ENCODE measurements at regions of chr1 and their contacts with region 1.

Region 1: GRCh38 chr1:24070821-24071393 is 41.0 kb downstream of the MYOM3 start:
- DNase-seq: peak; percentile 86 to 92 (median 90)
- ATAC-seq: peak; percentile 98
- H3K4me3 ChIP-seq: no peak overlapping the region
- H3K27ac ChIP-seq: no peak overlapping the region
- H3K4me1 ChIP-seq: no peaks in the 10 kb centered on the region; a peak in 1 of 5 replicates
- H3K27me3 ChIP-seq: peaks cover 36 to 68% of the 10 kb centered on the region in 2 experiments; a peak in 4 of 5 replicates
- CTCF ChIP-seq: peak; percentile 97 to 98 (median 97)
- EP300 ChIP-seq: no peak
- POLR2A ChIP-seq: no peak
- RAD21 ChIP-seq: peak; percentile 91 to 94

Region 2: DNA sequence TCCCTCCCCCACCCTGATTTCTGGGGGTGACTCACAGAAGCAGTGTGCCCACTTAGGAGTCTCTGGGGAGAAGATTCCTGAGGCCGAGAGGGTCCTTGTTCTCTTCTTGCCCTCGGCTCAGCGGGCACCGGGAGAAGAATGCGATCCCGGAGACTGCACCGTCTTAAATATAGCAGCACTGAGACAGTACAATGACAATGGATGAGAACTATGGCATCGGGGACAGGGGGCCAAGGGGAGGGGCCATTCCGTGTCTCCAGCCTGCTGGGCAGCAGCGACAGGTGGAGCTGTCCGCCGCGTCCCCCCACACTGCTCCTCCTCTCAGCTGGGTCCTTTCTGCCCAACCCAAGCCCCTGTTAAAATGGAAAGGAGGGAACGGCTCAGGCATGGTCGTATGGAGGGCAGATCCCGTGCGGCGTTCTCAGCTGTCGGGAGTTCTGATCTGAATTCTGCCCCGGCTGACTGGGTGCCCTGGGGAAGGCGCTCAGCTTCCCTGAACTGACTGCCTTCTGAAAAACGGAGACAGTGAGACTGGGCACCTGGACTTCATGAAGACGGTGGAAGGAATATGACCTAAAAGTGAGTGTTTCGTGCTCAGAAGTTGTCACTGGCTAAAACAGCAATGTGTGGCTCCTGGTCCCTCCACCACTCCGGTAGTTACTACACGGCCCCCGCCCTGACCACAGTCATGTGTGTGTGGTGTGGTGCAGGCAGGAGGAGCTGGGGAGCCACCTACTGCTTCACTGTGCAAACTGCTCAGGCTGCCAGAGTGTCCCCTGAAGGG is 41.3 kb after region 1 on chr1 and contains the start of gene MYOM3:
- CTCF ChIA-PET with region 1: interaction called, 7 read pairs
- POLR2A ChIA-PET with region 1: no interaction called
- in situ Hi-C with region 1: no loop called
- intact Hi-C with region 1: loop called (anchors 1 kb)
- DNase-seq: peak; percentile 70 to 81 (median 76)
- ATAC-seq: peak; percentile 99
- H3K4me3 ChIP-seq: no peak within 1 kb of the TSS
- H3K27ac ChIP-seq: no peak within 1 kb of the TSS
- H3K4me1 ChIP-seq: peaks cover 0 to 20% of the 10 kb centered on the region in 2 experiments; a peak in 3 of 5 replicates
- H3K27me3 ChIP-seq: peaks cover 60 to 91% of the 10 kb centered on the region in 2 experiments
- CTCF ChIP-seq: peak; percentile 82 to 89 (median 84)
- EP300 ChIP-seq: no peak
- POLR2A ChIP-seq: no peak
- RAD21 ChIP-seq: peak; percentile 91 to 96
- polyA plus RNA-seq, gene MYOM3: not detected

Region 3: GRCh38 chr1:24195874-24196273 is 125.0 kb after region 1 on chr1:
- CTCF ChIA-PET with region 1: interaction called, 7 read pairs
- POLR2A ChIA-PET with region 1: no interaction called
- in situ Hi-C with region 1: no loop called
- intact Hi-C with region 1: loop called (anchors 2 kb)
- DNase-seq: peak in 1 of 4 experiments; percentile 11
- ATAC-seq: no peak
- H3K4me3 ChIP-seq: no peak overlapping the region
- H3K27ac ChIP-seq: no peak overlapping the region
- H3K4me1 ChIP-seq: peaks cover 0 to 5% of the 10 kb centered on the region in 2 experiments; a peak in 2 of 5 replicates
- H3K27me3 ChIP-seq: peaks cover 10 to 41% of the 10 kb centered on the region in 2 experiments; a peak in 4 of 5 replicates
- CTCF ChIP-seq: no peak
- EP300 ChIP-seq: no peak
- POLR2A ChIP-seq: no peak
- RAD21 ChIP-seq: no peak

Region 4: DNA sequence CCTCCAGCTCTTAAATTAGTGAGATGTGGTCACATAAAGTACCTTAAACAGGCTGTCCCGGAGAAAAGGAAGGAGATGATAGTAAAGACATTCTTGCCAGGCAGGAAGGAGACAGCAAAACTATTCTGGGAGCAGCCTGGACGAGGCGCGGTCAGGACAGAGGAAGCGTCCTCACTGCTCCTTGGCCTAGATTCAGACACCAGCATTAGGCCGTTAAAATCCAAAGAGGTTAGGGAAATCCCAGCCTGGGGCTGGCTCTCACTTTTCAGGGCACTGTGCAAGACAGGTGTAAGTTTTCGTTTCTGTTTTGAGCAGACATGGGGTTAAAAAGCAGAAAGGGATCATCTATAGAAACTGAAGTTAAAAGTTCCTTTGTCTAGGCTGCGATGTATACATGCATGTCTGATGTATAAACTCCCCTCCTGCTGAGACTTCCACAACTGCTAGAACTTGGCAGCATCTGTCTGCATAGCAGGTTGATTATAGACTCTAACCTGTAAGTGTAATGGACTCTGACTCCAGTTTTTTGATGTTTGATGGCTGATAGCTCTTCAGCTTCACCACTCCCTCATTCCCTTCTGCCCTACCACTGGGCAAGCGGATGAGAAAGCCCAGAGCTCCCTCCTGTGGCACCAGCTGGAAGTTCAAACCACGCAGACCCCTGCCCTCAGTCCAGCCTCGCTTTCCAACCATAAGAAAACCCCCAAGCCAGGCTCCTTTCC is 321.1 kb after region 1 on chr1:
- CTCF ChIA-PET with region 1: interaction called, 16 read pairs
- POLR2A ChIA-PET with region 1: no interaction called
- in situ Hi-C with region 1: no loop called
- intact Hi-C with region 1: loop called (anchors 2 kb)
- DNase-seq: peak; percentile 71 to 74 (median 73)
- ATAC-seq: peak; percentile 95
- H3K4me3 ChIP-seq: no peak overlapping the region
- H3K27ac ChIP-seq: no peak overlapping the region
- H3K4me1 ChIP-seq: no peaks in the 10 kb centered on the region
- H3K27me3 ChIP-seq: peaks cover 0 to 3% of the 10 kb centered on the region in 2 experiments; a peak in 1 of 5 replicates
- CTCF ChIP-seq: peak; percentile 86 to 90 (median 87)
- EP300 ChIP-seq: no peak
- POLR2A ChIP-seq: no peak
- RAD21 ChIP-seq: peak; percentile 83 to 86

Measured in K562 (cell line).